GM12878 (cell line): ENCODE measurements at regions of chr3 and their contacts with region 1.

Region 1: DNA sequence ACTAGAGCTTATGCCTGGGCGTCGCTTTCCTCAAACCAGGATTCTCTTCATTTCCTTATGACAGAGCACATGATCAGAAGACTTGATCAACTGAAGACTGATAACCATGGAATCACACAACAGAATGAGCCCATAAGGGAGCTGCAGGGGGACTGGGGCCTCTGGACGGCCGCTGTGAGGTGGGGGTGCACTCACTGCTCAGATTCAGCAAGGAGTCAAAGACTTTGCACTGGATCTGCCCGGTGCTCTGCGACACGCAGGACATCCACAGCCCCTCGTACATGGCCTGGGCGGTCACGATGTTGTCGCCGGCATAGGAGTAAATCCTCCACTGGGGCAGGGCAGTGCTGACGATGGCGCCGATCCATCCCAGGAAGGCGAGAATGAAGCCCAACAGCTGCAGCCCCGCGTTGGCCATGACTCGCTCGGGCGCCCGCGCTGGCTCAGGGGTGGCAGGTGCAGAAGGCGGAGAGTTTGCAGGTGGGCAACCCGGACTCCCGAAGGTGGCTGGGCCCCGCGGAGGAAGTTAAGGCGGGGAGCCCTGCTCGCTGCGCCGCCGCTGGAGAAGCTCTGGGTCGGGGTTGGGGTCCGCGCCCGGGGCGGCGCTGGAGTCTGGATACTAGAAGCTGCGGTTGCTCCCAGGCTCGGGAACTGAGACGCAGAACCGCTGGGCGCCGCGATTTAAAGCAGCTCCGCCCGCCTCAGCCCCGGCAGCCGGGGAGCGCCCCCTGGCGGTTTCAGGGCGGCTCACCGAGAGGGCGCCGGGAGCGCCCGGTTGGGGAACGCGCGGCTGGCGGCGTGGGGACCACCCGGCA is at the start of gene CLDN1:
- DNase-seq: no peak
- ATAC-seq: peak; percentile 83
- H3K4me3 ChIP-seq: peak within 1 kb of the TSS; percentile 61; the same call in 1 of the 2 replicates
- H3K27ac ChIP-seq: no peak within 1 kb of the TSS
- H3K4me1 ChIP-seq: no peaks in the 10 kb centered on the region
- H3K27me3 ChIP-seq: peaks cover 2 to 8% of the 10 kb centered on the region in 2 experiments; a peak in 3 of 4 replicates
- CTCF ChIP-seq: peak; percentile 70 to 74 (median 72); a peak in 5 of 6 replicates
- EP300 ChIP-seq: no peak
- POLR2A ChIP-seq: no peak
- RAD21 ChIP-seq: peak; percentile 78
- polyA plus RNA-seq, gene CLDN1: 3.4 to 3.9 TPM

Region 2: DNA sequence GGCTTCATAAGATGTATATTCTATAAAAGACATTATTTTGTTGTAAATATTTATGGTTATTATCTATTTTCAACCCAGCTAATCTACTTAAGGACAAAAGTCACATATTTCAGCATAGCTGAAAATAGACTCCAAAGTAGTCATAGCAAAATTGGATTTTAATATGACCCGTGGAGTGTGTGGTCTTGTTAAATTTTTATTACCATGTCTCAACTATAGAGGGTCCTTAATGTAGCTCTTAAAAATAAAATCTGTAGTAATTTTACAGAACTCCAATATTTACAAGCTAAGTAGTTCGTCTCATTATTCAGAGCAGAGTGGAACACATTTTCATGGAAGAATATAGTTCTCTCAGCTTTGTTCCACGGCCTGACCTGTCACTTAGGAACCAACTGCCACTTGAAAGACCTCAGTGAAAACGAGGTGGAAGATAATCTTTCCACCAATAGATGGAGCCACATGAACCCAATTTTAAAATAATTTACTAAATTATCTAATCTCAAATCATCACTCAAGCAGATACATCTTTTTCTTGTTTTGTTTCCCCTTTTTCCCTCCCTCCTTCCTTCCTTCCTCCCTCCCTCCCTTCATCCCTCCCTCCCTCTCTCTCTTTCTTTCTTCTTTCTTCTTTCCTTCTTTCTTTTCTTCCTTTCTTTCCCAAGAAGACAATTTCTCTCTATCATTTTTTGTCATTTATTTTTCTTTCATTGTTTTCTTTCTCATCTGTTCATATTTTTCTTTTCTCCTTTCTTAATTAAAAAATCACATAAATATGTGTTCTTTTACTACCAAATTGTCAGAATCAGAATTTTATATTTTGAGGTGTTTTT is 96.9 kb before region 1 on chr3:
- CTCF ChIA-PET with region 1: interaction called, 80 read pairs
- POLR2A ChIA-PET with region 1: interaction called, 3 read pairs
- RAD21 ChIA-PET with region 1: interaction called, 32 read pairs
- SMC1A ChIA-PET with region 1: interaction called, 35 read pairs
- in situ Hi-C with region 1: no loop called
- intact Hi-C with region 1: loop called (anchors 5 kb)
- DNase-seq: no peak
- ATAC-seq: peak; percentile 45
- H3K4me3 ChIP-seq: no peak overlapping the region
- H3K27ac ChIP-seq: no peak overlapping the region
- H3K4me1 ChIP-seq: no peaks in the 10 kb centered on the region
- H3K27me3 ChIP-seq: no peaks in the 10 kb centered on the region
- CTCF ChIP-seq: peak; percentile 13 to 38 (median 16); a peak in 3 of 6 replicates
- EP300 ChIP-seq: no peak
- POLR2A ChIP-seq: no peak
- RAD21 ChIP-seq: peak; percentile 60

Region 3: GRCh38 chr3:190301591-190301990 is 20.4 kb before region 1 on chr3:
- CTCF ChIA-PET with region 1: interaction called, 45 read pairs
- POLR2A ChIA-PET with region 1: interaction called, 8 read pairs
- RAD21 ChIA-PET with region 1: interaction called, 16 read pairs
- SMC1A ChIA-PET with region 1: interaction called, 46 read pairs
- in situ Hi-C with region 1: no loop called
- intact Hi-C with region 1: no loop called
- DNase-seq: no peak
- ATAC-seq: peak; percentile 41
- H3K4me3 ChIP-seq: no peak overlapping the region
- H3K27ac ChIP-seq: no peak overlapping the region
- H3K4me1 ChIP-seq: no peaks in the 10 kb centered on the region
- H3K27me3 ChIP-seq: no peaks in the 10 kb centered on the region
- CTCF ChIP-seq: no peak
- EP300 ChIP-seq: no peak
- POLR2A ChIP-seq: no peak
- RAD21 ChIP-seq: no peak

Region 4: DNA sequence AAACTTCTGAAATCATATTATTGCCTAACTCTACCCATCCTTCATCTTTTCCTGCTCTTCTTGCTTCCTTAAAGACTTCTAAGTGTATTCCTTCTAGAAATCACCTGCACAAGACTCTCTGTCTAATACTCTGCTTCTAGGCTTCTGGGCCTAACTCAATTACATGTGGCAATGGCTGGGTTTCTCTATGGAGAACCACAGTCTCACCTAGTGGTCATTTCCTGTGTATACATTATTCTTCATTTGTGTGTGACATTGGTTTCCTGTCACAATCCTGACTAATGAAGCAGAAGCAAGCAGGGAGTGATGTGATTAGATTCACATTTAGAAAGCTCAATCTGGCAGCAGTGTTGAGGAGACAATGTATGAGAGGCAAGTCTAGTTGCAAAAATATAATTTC is 17.1 kb after region 1 on chr3:
- CTCF ChIA-PET with region 1: interaction called, 21 read pairs
- POLR2A ChIA-PET with region 1: no interaction called
- RAD21 ChIA-PET with region 1: interaction called, 10 read pairs
- SMC1A ChIA-PET with region 1: interaction called, 14 read pairs
- in situ Hi-C with region 1: no loop called
- intact Hi-C with region 1: no loop called
- DNase-seq: peak; percentile 11
- ATAC-seq: peak; percentile 95
- H3K4me3 ChIP-seq: no peak overlapping the region
- H3K27ac ChIP-seq: no peak overlapping the region
- H3K4me1 ChIP-seq: no peaks in the 10 kb centered on the region
- H3K27me3 ChIP-seq: no peaks in the 10 kb centered on the region
- CTCF ChIP-seq: peak; percentile 21 to 34 (median 28); a peak in 4 of 6 replicates
- EP300 ChIP-seq: no peak
- POLR2A ChIP-seq: no peak
- RAD21 ChIP-seq: peak; percentile 62

Region 5: DNA sequence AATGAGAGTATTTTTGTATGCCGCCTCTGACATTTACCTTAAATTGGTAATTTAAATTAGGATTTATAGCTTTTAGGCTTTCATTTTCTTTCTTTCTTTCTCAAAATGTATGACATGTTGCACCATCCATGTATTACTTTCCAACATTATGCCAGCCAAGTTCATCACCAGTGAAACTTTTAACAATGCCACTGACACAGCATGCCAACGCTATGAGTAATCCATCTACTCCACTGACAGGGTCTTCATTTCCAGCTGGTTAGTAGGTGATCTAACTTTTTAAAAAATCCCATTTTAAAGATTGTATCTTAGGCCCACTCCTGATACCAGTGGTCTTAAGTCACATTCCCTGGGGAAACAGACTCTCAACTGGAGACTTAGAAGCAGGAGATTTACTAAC is 44.1 kb after region 1 on chr3:
- CTCF ChIA-PET with region 1: interaction called, 16 read pairs
- POLR2A ChIA-PET with region 1: no interaction called
- RAD21 ChIA-PET with region 1: interaction called, 6 read pairs
- SMC1A ChIA-PET with region 1: interaction called, 13 read pairs
- in situ Hi-C with region 1: no loop called
- intact Hi-C with region 1: no loop called
- DNase-seq: no peak
- ATAC-seq: no peak
- H3K4me3 ChIP-seq: no peak overlapping the region
- H3K27ac ChIP-seq: no peak overlapping the region
- H3K4me1 ChIP-seq: no peaks in the 10 kb centered on the region
- H3K27me3 ChIP-seq: no peaks in the 10 kb centered on the region
- CTCF ChIP-seq: no peak
- EP300 ChIP-seq: no peak
- POLR2A ChIP-seq: no peak
- RAD21 ChIP-seq: no peak

Region 6: DNA sequence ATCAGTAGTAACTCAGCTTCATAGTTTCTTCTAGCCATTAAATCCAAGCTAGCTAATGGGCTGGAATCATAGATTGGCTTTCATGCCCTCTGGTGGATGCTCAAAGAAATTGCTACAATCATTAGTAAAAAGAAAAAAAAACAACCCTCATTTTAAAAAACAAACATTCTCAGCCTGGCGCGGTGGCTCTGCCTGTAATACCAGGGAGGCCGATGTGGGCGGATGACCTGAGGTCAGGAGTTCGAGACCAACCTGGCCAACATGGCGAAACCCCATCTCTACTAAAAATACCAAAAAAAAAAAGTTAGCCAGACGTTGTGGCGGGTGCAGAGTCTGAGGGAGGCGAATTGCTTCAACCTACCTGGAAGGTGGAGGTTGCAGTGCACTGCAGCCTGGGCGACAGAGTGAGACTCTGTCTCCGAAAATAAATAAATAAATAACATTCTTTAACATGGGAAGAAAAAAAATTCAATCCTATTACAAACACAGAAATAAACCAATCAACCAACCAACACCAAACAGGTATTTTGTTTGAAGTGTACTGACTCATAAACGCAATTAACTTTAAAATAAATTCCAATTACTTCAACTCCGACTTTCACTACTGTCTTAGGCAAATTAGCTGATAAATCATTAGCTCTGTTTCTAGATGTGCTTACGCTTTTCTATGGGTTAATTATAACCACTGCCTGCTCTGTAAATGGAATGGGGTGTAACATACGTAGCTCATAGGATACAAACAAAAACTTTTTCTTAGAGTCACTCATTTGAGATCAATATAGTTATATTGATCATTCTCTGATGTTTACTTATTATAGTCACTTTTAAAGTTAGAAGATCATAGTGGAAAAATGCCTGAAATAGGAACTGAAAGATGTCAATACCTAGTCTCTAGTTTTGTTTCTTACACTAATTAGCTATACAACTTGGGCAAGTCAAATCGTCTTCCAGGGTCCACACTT is 102.8 kb after region 1 on chr3:
- CTCF ChIA-PET with region 1: interaction called, 8 read pairs
- POLR2A ChIA-PET with region 1: no interaction called
- RAD21 ChIA-PET with region 1: interaction called, 7 read pairs
- SMC1A ChIA-PET with region 1: interaction called, 10 read pairs
- in situ Hi-C with region 1: no loop called
- intact Hi-C with region 1: no loop called
- DNase-seq: peak; percentile 20
- ATAC-seq: peak; percentile 90
- H3K4me3 ChIP-seq: no peak overlapping the region
- H3K27ac ChIP-seq: no peak overlapping the region
- H3K4me1 ChIP-seq: peaks cover 6% of the 10 kb centered on the region
- H3K27me3 ChIP-seq: no peaks in the 10 kb centered on the region
- CTCF ChIP-seq: peak; percentile 48 to 59 (median 53); a peak in 5 of 6 replicates
- EP300 ChIP-seq: no peak
- POLR2A ChIP-seq: no peak
- RAD21 ChIP-seq: peak; percentile 69